Ascending aorta (tissue), 2 donors: ENCODE measurements at regions of chr20 and their contacts with region 1.

Region 1: GRCh38 chr20:34516247-34517113 is at the start of gene DYNLRB1:
- DNase-seq: peak; percentile 82 to 98
- H3K4me3 ChIP-seq: peak within 1 kb of the TSS; percentile 78 to 80
- H3K27ac ChIP-seq: peak within 1 kb of the TSS; percentile 89 to 97
- H3K4me1 ChIP-seq: peaks cover 0 to 27% of the 10 kb centered on the region in 2 donors
- H3K27me3 ChIP-seq: no peaks in the 10 kb centered on the region
- CTCF ChIP-seq: no peak
- total RNA-seq, gene DYNLRB1: 148 TPM

Region 2: GRCh38 chr20:34475979-34476736 is 40.3 kb before region 1 on chr20:
- intact Hi-C with region 1: loop called (anchors 5 kb)
- DNase-seq: peak in 1 of 2 donors; percentile 75
- H3K4me3 ChIP-seq: no peak overlapping the region
- H3K27ac ChIP-seq: peak overlapping the region in 1 of 2 donors; percentile 34
- H3K4me1 ChIP-seq: peaks cover 0 to 12% of the 10 kb centered on the region in 2 donors
- H3K27me3 ChIP-seq: no peaks in the 10 kb centered on the region
- CTCF ChIP-seq: peak; percentile 48 to 79 (median 62)

Region 3: DNA sequence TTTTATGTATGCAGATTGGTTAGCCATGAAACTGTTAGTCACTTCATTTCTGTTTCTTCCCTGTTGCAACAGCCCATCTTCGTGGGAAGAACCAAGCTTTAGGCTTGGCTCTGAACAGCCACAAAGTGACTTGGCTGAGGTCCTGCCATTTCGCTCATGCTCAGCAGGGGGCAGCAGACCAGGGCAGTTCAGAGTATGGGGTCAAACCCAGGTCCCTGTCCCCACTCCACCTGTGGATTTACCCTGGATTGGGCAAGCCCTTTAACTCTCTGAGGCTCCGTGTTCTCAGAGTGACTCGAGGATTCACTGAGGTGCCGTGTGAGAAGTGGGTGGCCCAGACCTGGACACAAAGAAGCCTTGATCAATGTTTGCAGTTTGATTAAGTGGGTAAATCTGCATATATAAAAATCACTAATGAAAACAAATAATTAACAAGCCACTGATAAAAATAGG is 22.2 kb after region 1 on chr20:
- intact Hi-C with region 1: no loop called
- DNase-seq: no peak
- H3K4me3 ChIP-seq: no peak overlapping the region
- H3K27ac ChIP-seq: no peak overlapping the region
- H3K4me1 ChIP-seq: no peaks in the 10 kb centered on the region
- H3K27me3 ChIP-seq: no peaks in the 10 kb centered on the region
- CTCF ChIP-seq: peak; percentile 37 to 63 (median 59)